CD8-positive, alpha-beta T cell (primary cell): ENCODE measurements at regions of chr4 and their contacts with region 1.

Region 1: GRCh38 chr4:183450108-183450507 is 5.7 kb downstream of the CDKN2AIP start:
- DNase-seq: no peak
- ATAC-seq: no peak
- H3K4me3 ChIP-seq: no peak overlapping the region
- H3K4me3 Mint-ChIP-seq: no peak overlapping the region
- H3K27ac ChIP-seq: no peak overlapping the region
- H3K27ac Mint-ChIP-seq: peak overlapping the region; percentile 71
- H3K4me1 ChIP-seq: peaks cover 39% of the 10 kb centered on the region
- H3K4me1 Mint-ChIP-seq: peaks cover 60% of the 10 kb centered on the region
- H3K27me3 ChIP-seq: no peaks in the 10 kb centered on the region
- H3K27me3 Mint-ChIP-seq: no peaks in the 10 kb centered on the region
- CTCF ChIP-seq: no peak

Region 2: GRCh38 chr4:182930889-182931288 is 519.2 kb before region 1 on chr4:
- CTCF ChIA-PET with region 1: no interaction called
- POLR2A ChIA-PET with region 1: interaction called, 10 read pairs
- intact Hi-C with region 1: no loop called
- DNase-seq: no peak
- ATAC-seq: no peak
- H3K4me3 ChIP-seq: no peak overlapping the region
- H3K4me3 Mint-ChIP-seq: no peak overlapping the region
- H3K27ac ChIP-seq: no peak overlapping the region
- H3K27ac Mint-ChIP-seq: no peak overlapping the region
- H3K4me1 ChIP-seq: no peaks in the 10 kb centered on the region
- H3K4me1 Mint-ChIP-seq: no peaks in the 10 kb centered on the region
- H3K27me3 ChIP-seq: no peaks in the 10 kb centered on the region
- H3K27me3 Mint-ChIP-seq: peaks cover 12% of the 10 kb centered on the region
- CTCF ChIP-seq: no peak